ENCODE measurements at regions of chr6 and their contacts with region 1.

Region 1: GRCh38 chr6:112043032-112044007 is 10.6 kb upstream of the CCN6 start:
- DNase-seq: peak; percentile 94
- H3K4me3 Mint-ChIP-seq: peak overlapping the region; percentile 91
- H3K27ac Mint-ChIP-seq: peak overlapping the region; percentile 97
- H3K4me1 Mint-ChIP-seq: peaks cover 16% of the 10 kb centered on the region
- H3K27me3 Mint-ChIP-seq: peaks cover 4% of the 10 kb centered on the region

Region 2: DNA sequence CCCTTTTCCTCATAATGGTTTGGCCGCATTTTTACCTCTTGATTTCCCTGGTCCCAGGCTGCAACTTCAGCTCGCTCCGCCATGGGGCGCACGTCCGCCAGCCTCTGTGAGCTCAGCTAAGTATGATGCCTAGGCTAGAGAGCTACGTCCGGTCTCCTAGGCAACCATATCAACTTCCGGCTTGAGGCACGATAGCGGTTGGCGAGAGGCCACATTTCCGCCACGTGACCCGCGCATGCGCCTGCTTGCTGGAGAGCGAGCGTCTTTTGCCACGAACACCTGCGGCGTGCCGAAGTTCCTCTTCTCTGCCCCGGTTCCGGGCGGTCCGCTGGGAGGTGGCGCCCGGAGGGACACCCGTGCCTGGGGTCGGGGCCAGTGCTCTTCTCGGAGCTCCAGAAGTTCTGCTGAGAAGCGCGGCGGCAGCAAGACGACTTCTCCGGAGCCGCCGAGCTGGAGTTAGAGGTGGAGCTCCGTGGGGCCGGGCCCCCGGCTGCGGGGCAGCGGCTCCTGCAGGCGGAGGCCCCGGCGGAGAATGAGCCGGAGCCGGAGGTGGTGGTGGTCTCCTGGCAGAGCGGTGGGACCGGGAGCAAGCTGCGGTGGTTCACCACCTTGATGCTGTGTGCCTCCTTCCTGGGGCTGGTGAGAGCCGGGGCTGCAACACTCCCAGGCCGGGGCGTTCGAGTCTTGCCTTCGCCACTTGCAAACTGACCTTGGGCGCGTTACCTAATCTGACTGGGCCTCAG is 784.1 kb before region 1 on chr6:
- CTCF ChIA-PET with region 1: interaction called, 22 read pairs
- DNase-seq: peak; percentile 99
- H3K4me3 Mint-ChIP-seq: peak overlapping the region; percentile 82
- H3K27ac Mint-ChIP-seq: peak overlapping the region; percentile 91
- H3K4me1 Mint-ChIP-seq: peaks cover 38% of the 10 kb centered on the region
- H3K27me3 Mint-ChIP-seq: peaks cover 12% of the 10 kb centered on the region

Region 3: DNA sequence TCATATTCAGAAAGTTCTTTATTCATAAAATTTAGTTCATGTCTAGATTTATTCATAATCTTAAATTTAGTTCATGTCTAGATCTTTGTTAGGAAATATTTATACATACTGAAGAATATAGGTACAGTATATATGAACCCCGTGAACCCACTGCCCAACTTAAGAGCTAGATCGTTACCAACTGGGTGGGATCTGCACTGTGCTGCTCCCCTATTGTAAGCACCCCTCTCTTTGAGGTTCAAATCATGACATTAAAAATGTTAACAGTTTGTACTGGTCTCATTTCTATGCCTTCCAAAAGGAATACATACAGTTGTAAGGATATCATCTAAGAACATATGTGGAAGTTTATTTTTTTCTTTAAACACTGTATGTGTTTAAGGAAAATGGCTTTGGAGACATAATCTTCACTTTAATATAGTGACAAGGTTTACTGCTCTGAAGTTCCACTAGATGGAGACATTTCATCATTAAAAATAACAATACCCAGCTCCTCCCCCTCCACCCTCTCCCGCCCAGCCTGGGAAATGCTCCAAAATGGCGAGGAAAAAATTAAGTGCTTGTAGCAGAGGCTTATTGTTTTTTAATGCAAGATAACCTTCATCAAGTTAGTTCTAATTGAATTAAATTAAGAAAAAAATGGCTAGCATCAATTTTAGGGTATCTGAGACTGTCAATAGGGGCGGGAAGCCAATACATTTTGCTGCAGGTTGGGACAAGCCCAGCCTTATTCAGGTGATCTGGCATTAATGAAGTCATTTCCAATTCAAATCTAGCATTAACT is 333.5 kb before region 1 on chr6:
- CTCF ChIA-PET with region 1: interaction called, 44 read pairs
- DNase-seq: peak; percentile 66
- H3K4me3 Mint-ChIP-seq: no peak overlapping the region
- H3K27ac Mint-ChIP-seq: peak overlapping the region; percentile 74
- H3K4me1 Mint-ChIP-seq: peaks cover 53% of the 10 kb centered on the region
- H3K27me3 Mint-ChIP-seq: no peaks in the 10 kb centered on the region

Region 4: DNA sequence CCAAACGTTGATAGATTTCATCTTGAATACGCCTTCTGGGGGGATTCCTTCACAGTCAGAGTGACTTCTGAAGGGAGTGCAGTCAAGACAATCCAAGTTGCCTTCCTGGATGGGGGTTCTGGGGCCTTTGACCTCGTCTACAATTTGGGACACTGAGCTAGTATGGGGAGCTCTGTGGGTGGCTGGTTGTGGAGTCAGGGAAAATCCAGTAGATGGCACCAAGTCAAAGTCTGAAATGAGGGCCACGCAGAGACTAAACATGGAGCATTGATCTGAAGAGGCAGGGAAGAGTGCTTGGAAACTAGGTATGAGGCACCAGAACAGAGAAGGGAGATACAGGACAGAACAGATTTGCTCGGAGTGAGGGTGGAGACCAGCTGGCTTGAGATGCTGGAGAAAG is 33.0 kb before region 1 on chr6:
- CTCF ChIA-PET with region 1: interaction called, 147 read pairs
- DNase-seq: peak; percentile 43
- H3K4me3 Mint-ChIP-seq: no peak overlapping the region
- H3K27ac Mint-ChIP-seq: no peak overlapping the region
- H3K4me1 Mint-ChIP-seq: no peaks in the 10 kb centered on the region
- H3K27me3 Mint-ChIP-seq: no peaks in the 10 kb centered on the region

Region 5: GRCh38 chr6:112163295-112164257 is 120.3 kb after region 1 on chr6:
- CTCF ChIA-PET with region 1: interaction called, 18 read pairs
- DNase-seq: peak; percentile 82
- H3K4me3 Mint-ChIP-seq: peak overlapping the region; percentile 34
- H3K27ac Mint-ChIP-seq: peak overlapping the region; percentile 21
- H3K4me1 Mint-ChIP-seq: peaks cover 19% of the 10 kb centered on the region
- H3K27me3 Mint-ChIP-seq: peaks cover 37% of the 10 kb centered on the region

Measured in activated naive CD4-positive, alpha-beta T cell treated with anti-CD3 and anti-CD28 coated beads, Interleukin-2, amount 10 ng/mL, durations not matched to agents 7 days and 5 days (primary cell).